SK-N-SH (cell line): ENCODE measurements at regions of chr16 and their contacts with region 1.

Region 1: DNA sequence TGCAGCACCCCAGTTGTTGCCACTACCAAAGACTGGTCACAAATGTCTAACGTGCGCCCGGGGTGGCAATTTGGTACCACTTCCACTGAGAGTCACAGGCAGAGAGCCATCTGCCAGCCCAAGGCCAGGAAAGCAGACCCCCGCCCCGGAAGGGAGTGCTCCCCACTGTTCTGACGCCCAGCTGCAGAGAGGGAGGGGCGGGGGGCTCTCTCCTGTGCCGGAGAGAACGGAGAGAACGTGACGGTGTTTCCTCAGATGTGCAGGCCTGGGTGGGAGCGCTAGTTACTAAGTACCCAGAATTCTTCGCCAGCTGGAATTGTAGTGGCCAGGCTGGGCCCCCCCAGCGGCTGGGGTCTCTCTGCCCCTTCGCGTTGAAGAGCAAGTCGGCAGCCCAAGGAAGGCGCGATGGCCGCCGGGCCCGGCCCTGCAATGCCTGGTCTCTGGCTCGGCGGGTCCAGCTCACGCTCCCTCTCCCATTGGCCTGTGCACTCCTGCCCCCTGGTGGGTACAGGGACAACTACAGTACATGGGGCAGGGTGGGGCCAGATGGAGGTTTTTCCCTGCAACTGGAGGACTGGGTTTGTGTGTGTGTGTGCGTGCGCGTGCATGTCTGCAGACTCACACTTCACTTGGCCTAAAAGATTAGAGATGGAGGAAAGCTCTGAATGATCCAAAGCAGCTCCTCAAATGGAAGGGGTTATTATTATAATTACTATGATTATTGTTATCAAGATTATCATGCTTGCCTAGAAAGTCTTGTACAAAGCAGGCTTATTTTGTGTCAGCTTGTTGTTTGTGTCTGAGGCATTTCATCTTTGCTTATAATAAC is 107.1 kb downstream of the AMFR start:
- DNase-seq: peak; percentile 97
- H3K4me3 ChIP-seq: no peak overlapping the region; a peak in 1 of 4 replicates
- H3K27ac ChIP-seq: peak overlapping the region in 1 of 2 experiments; percentile 16; a peak in 1 of 4 replicates
- H3K4me1 ChIP-seq: peaks cover 0 to 25% of the 10 kb centered on the region in 2 experiments; a peak in 1 of 4 replicates
- H3K27me3 ChIP-seq: no peaks in the 10 kb centered on the region; the same call in 1 of the 2 replicates
- CTCF ChIP-seq: peak; percentile 84
- EP300 ChIP-seq: no peak
- RAD21 ChIP-seq: peak; percentile 96

Region 2: GRCh38 chr16:56041686-56042085 is 276.5 kb before region 1 on chr16:
- CTCF ChIA-PET with region 1: interaction called, 63 read pairs
- POLR2A ChIA-PET with region 1: no interaction called
- DNase-seq: peak; percentile 58
- H3K4me3 ChIP-seq: no peak overlapping the region; a peak in 1 of 4 replicates
- H3K27ac ChIP-seq: no peak overlapping the region
- H3K4me1 ChIP-seq: peaks cover 0 to 6% of the 10 kb centered on the region in 2 experiments; a peak in 1 of 4 replicates
- H3K27me3 ChIP-seq: no peaks in the 10 kb centered on the region
- CTCF ChIP-seq: no peak
- EP300 ChIP-seq: no peak
- RAD21 ChIP-seq: peak; percentile 84

Region 3: GRCh38 chr16:56246051-56246817 is 72.0 kb before region 1 on chr16:
- CTCF ChIA-PET with region 1: interaction called, 12 read pairs
- POLR2A ChIA-PET with region 1: no interaction called
- DNase-seq: peak; percentile 56
- H3K4me3 ChIP-seq: no peak overlapping the region
- H3K27ac ChIP-seq: peak overlapping the region in 1 of 2 experiments; percentile 92; a peak in 2 of 4 replicates
- H3K4me1 ChIP-seq: peaks cover 0 to 34% of the 10 kb centered on the region in 2 experiments; a peak in 1 of 4 replicates
- H3K27me3 ChIP-seq: no peaks in the 10 kb centered on the region
- CTCF ChIP-seq: no peak
- EP300 ChIP-seq: peak in 1 of 2 experiments; percentile 36; a peak in 1 of 4 replicates
- RAD21 ChIP-seq: peak; percentile 50

Region 4: DNA sequence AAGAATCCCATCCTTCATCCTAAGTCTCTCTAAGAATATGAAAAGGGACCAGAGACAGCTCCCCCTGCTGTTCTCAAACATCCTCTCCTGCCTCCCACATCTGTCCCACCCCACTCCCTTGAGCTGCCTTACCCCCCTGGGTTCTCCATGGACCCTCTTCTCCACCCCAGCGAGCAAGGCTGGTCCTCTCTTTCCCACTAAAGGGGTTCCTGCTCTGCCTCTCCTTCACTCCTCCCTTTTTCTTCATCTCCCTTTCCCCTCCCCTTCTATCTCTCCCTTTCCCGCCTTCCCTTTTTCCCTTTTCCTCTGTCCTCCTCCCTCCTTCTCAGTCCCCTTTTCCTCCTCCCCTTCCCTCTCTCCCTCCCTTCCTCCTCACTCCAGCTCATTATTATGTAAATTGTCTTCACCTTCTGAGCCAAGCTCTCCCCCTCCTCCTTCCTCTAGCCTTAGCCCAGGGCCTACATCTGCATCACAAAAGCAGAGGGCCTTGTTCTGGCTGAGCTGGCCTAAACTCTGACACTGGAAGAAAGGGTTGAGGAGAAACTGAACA is 36.9 kb before region 1 on chr16:
- CTCF ChIA-PET with region 1: interaction called, 12 read pairs
- POLR2A ChIA-PET with region 1: no interaction called
- DNase-seq: peak; percentile 58
- H3K4me3 ChIP-seq: no peak overlapping the region
- H3K27ac ChIP-seq: no peak overlapping the region
- H3K4me1 ChIP-seq: peaks cover 0 to 27% of the 10 kb centered on the region in 2 experiments; a peak in 1 of 4 replicates
- H3K27me3 ChIP-seq: no peaks in the 10 kb centered on the region
- CTCF ChIP-seq: peak; percentile 34; the same call in 1 of the 2 replicates
- EP300 ChIP-seq: no peak
- RAD21 ChIP-seq: peak; percentile 50

Region 5: DNA sequence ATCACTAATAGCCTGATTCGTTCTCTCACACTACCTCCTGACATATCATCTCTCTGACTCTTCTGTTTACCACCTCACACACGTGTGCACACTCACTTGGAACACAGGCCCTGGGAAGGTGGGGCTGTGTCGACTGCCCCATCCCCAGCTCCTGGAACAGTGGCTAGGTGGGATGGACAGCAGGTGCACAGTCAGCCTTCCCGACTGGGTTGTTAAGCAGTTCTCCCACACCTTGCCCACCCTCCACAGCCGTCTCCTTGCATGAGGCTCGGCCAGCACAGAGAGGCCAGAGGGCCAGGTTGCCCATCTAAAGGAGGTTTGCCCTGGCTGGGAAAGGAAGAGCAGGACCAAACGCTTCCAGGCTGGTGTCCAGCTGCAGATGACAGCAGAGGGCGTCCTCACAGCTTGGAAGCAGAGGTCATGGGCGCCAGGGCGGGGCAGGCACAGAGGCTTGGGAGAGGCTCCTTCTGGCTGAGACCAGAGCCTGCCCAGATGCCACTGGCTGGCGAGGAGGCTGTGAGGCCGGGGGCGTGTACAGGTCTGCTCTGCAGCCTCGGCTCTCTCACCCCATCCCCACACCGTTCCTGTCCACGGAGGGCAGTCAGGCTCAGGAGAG is 14.4 kb after region 1 on chr16:
- CTCF ChIA-PET with region 1: interaction called, 52 read pairs
- POLR2A ChIA-PET with region 1: no interaction called
- DNase-seq: peak; percentile 57
- H3K4me3 ChIP-seq: no peak overlapping the region
- H3K27ac ChIP-seq: no peak overlapping the region
- H3K4me1 ChIP-seq: no peaks in the 10 kb centered on the region; a peak in 1 of 4 replicates
- H3K27me3 ChIP-seq: no peaks in the 10 kb centered on the region
- CTCF ChIP-seq: peak; percentile 46
- EP300 ChIP-seq: no peak
- RAD21 ChIP-seq: peak; percentile 51

Region 6: DNA sequence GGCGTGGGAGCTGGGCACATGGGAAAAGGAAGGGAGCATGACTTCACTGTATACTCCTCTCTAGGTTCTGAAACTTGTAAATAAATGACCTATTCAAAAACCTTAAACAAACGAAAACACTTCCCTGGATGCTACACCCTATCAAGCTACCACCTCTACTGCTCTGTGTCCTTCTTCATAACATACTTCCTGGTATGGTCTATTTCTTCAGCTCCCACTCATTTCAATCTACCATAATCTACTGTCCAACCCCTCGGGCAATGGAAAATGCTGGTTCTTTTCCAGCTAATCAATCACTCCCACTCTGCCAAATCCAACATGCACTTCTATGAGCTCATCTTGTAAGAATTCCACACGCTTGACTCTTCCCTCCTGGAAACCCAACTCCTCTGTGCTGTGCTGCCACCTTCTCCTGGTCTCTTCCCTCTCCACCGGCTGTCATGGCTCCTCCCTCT is 64.7 kb after region 1 on chr16:
- CTCF ChIA-PET with region 1: no interaction called
- POLR2A ChIA-PET with region 1: no interaction called
- DNase-seq: no peak
- H3K4me3 ChIP-seq: no peak overlapping the region
- H3K27ac ChIP-seq: no peak overlapping the region
- H3K4me1 ChIP-seq: no peaks in the 10 kb centered on the region
- H3K27me3 ChIP-seq: no peaks in the 10 kb centered on the region
- CTCF ChIP-seq: no peak
- EP300 ChIP-seq: no peak
- RAD21 ChIP-seq: no peak